ENCODE measurements at regions of chr2 and their contacts with region 1.

Region 1: GRCh38 chr2:85678794-85679672 is 11.0 kb upstream of the SFTPB start:
- DNase-seq: peak; percentile 91
- H3K4me3 Mint-ChIP-seq: no peak overlapping the region
- H3K27ac Mint-ChIP-seq: no peak overlapping the region
- H3K4me1 Mint-ChIP-seq: peaks cover 32% of the 10 kb centered on the region
- H3K27me3 Mint-ChIP-seq: no peaks in the 10 kb centered on the region
- CTCF ChIP-seq: peak; percentile 99

Region 2: GRCh38 chr2:85602476-85603234 is 76.4 kb before region 1 on chr2 and contains the start of gene TMEM150A:
- CTCF ChIA-PET with region 1: no interaction called
- POLR2A ChIA-PET with region 1: no interaction called
- intact Hi-C with region 1: no loop called
- DNase-seq: peak; percentile 90
- H3K4me3 Mint-ChIP-seq: peak within 1 kb of the TSS; percentile 79
- H3K27ac Mint-ChIP-seq: peak within 1 kb of the TSS; percentile 70
- H3K4me1 Mint-ChIP-seq: peaks cover 12% of the 10 kb centered on the region
- H3K27me3 Mint-ChIP-seq: no peaks in the 10 kb centered on the region
- CTCF ChIP-seq: peak; percentile 30
- total RNA-seq, gene TMEM150A: 12.5 and 14.5 TPM in 2 replicates

Region 3: GRCh38 chr2:85642725-85643124 is 36.3 kb before region 1 on chr2:
- CTCF ChIA-PET with region 1: interaction called, 21 read pairs
- POLR2A ChIA-PET with region 1: no interaction called
- intact Hi-C with region 1: no loop called
- DNase-seq: no peak
- H3K4me3 Mint-ChIP-seq: no peak overlapping the region
- H3K27ac Mint-ChIP-seq: no peak overlapping the region
- H3K4me1 Mint-ChIP-seq: no peaks in the 10 kb centered on the region
- H3K27me3 Mint-ChIP-seq: no peaks in the 10 kb centered on the region
- CTCF ChIP-seq: no peak

Region 4: GRCh38 chr2:85694052-85695025 is 15.3 kb after region 1 on chr2 and contains the start of gene GNLY:
- CTCF ChIA-PET with region 1: interaction called, 13 read pairs
- POLR2A ChIA-PET with region 1: interaction called, 5 read pairs
- intact Hi-C with region 1: no loop called
- DNase-seq: no peak
- H3K4me3 Mint-ChIP-seq: no peak within 1 kb of the TSS
- H3K27ac Mint-ChIP-seq: no peak within 1 kb of the TSS
- H3K4me1 Mint-ChIP-seq: peaks cover 6% of the 10 kb centered on the region
- H3K27me3 Mint-ChIP-seq: no peaks in the 10 kb centered on the region
- CTCF ChIP-seq: no peak
- total RNA-seq, gene GNLY: not detected in 2 replicates

Region 5: DNA sequence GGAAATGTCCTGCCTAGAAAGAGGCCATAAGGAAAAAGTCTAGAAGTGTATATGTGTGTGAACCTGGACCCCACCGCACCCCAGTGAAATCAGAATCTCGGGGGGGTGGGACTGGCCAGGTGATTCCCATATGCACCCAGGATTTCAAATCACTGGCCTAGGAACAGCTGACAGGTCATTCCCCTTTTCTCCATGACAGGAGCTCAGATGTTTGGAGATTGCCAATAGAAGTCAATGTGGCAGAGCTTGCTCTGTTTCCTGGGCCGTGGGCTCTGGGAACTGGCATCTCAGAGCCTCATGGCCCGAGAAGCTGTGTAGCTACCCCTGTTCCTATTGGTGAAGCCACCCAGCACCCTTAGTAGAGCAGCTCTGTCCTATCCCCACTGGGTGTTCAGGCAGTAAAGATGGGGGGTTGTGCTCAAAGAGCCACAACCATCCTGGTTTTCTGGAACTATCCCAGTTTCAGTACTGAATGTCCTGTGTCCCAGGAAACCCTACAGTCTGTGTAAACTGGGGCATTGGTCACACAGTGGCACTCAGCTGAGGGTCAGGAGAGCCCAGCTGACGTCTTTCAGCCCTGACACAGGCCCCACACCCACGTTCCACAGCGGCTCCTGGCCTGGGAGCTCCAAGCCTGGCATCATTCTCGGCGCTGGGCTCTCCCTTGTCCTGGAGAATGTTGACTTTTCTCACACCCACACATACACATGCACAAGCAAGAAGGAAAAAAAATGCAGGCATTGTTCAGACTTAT is 34.0 kb after region 1 on chr2:
- CTCF ChIA-PET with region 1: interaction called, 166 read pairs
- POLR2A ChIA-PET with region 1: interaction called, 5 read pairs
- intact Hi-C with region 1: no loop called
- DNase-seq: peak; percentile 90
- H3K4me3 Mint-ChIP-seq: no peak overlapping the region
- H3K27ac Mint-ChIP-seq: peak overlapping the region; percentile 87
- H3K4me1 Mint-ChIP-seq: peaks cover 28% of the 10 kb centered on the region
- H3K27me3 Mint-ChIP-seq: no peaks in the 10 kb centered on the region
- CTCF ChIP-seq: no peak

Region 6: GRCh38 chr2:85750587-85751575 is 71.8 kb after region 1 on chr2:
- CTCF ChIA-PET with region 1: interaction called, 6 read pairs
- POLR2A ChIA-PET with region 1: no interaction called
- intact Hi-C with region 1: loop called (anchors 2 kb)
- DNase-seq: peak; percentile 73
- H3K4me3 Mint-ChIP-seq: no peak overlapping the region
- H3K27ac Mint-ChIP-seq: no peak overlapping the region
- H3K4me1 Mint-ChIP-seq: peaks cover 9% of the 10 kb centered on the region
- H3K27me3 Mint-ChIP-seq: peaks cover 66% of the 10 kb centered on the region
- CTCF ChIP-seq: peak; percentile 83